ENCODE measurements at regions of chr11 and their contacts with region 1.

Region 1: DNA sequence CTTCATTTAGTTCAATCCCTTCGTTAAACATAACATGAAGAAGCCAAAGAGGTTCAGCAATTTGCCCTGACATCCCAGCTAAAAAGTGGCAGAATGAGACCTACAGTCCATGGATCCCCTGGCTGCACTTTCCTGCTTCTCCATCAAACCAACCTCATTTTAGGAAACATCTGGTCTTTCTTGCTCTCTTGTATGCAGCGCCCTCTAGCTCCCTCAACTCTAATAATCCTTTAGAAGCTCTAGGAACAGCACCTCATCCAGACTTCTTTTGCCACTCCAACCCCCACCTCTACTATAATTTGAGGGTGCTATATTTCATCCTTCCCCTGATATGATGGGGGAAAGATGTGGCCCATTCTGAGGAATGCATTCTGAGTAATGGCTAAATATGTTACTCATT is 7.4 kb downstream of the CNTF start:
- DNase-seq: peak in 3 of 9 experiments; percentile 11 to 57 (median 43)
- ATAC-seq: no peak
- H3K4me3 ChIP-seq: no peak overlapping the region
- H3K4me3 Mint-ChIP-seq: no peak overlapping the region
- H3K27ac ChIP-seq: no peak overlapping the region
- H3K27ac Mint-ChIP-seq: no peak overlapping the region
- H3K4me1 ChIP-seq: no peaks in the 10 kb centered on the region
- H3K4me1 Mint-ChIP-seq: no peaks in the 10 kb centered on the region
- H3K27me3 ChIP-seq: no peaks in the 10 kb centered on the region
- H3K27me3 Mint-ChIP-seq: no peaks in the 10 kb centered on the region
- CTCF ChIP-seq: peak; percentile 53

Region 2: GRCh38 chr11:58562375-58562800 is 67.5 kb before region 1 on chr11:
- CTCF ChIA-PET with region 1: interaction called, 35 read pairs
- POLR2A ChIA-PET with region 1: no interaction called
- intact Hi-C with region 1: no loop called
- DNase-seq: peak in 1 of 9 experiments; percentile 36
- ATAC-seq: peak; percentile 48
- H3K4me3 ChIP-seq: no peak overlapping the region
- H3K4me3 Mint-ChIP-seq: peak overlapping the region; percentile 20
- H3K27ac ChIP-seq: peak overlapping the region; percentile 7 to 37
- H3K27ac Mint-ChIP-seq: peak overlapping the region; percentile 90
- H3K4me1 ChIP-seq: peaks cover 53% of the 10 kb centered on the region
- H3K4me1 Mint-ChIP-seq: peaks cover 70% of the 10 kb centered on the region
- H3K27me3 ChIP-seq: no peaks in the 10 kb centered on the region
- H3K27me3 Mint-ChIP-seq: no peaks in the 10 kb centered on the region
- CTCF ChIP-seq: no peak

Region 3: GRCh38 chr11:58616594-58616993 is 13.3 kb before region 1 on chr11:
- CTCF ChIA-PET with region 1: interaction called, 13 read pairs
- POLR2A ChIA-PET with region 1: interaction called, 3 read pairs
- intact Hi-C with region 1: no loop called
- DNase-seq: no peak
- ATAC-seq: no peak
- H3K4me3 ChIP-seq: no peak overlapping the region
- H3K4me3 Mint-ChIP-seq: no peak overlapping the region
- H3K27ac ChIP-seq: no peak overlapping the region
- H3K27ac Mint-ChIP-seq: no peak overlapping the region
- H3K4me1 ChIP-seq: peaks cover 7% of the 10 kb centered on the region
- H3K4me1 Mint-ChIP-seq: peaks cover 6% of the 10 kb centered on the region
- H3K27me3 ChIP-seq: no peaks in the 10 kb centered on the region
- H3K27me3 Mint-ChIP-seq: no peaks in the 10 kb centered on the region
- CTCF ChIP-seq: no peak

Region 4: DNA sequence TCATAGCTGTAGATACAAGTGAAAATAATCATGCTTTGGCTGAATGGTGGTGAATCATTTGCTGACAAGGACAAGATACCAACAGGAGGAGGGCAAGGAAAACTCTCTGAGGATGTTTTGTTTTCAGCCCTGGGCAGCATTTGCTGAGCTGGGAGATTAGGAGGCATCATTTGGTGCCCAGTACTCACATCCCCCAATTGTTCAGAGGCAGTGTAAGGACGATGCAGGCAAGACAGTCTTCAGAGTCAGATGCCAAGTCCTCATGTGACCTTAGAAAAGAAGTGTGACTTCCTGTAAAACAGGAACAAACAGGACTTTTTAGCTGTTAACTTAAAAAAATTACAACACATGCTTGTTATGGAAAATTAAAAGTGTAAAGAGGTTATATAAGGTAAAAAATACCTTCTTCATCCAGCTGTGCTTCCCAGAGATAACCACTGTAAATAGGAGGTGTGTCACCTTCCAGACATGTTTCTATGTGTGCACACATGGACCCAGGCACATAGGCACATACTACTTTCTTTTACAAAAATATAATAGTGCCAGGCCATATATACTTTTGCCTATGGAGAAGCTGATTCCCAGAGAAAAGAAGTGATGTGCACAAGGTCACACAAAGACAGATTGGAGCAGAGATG is 10.6 kb after region 1 on chr11:
- CTCF ChIA-PET with region 1: interaction called, 35 read pairs
- POLR2A ChIA-PET with region 1: interaction called, 7 read pairs
- intact Hi-C with region 1: no loop called
- DNase-seq: peak in 3 of 9 experiments; percentile 32 to 63 (median 58)
- ATAC-seq: peak; percentile 70
- H3K4me3 ChIP-seq: no peak overlapping the region
- H3K4me3 Mint-ChIP-seq: no peak overlapping the region
- H3K27ac ChIP-seq: peak overlapping the region in 1 of 2 experiments; percentile 34
- H3K27ac Mint-ChIP-seq: peak overlapping the region; percentile 84
- H3K4me1 ChIP-seq: peaks cover 19% of the 10 kb centered on the region
- H3K4me1 Mint-ChIP-seq: peaks cover 27% of the 10 kb centered on the region
- H3K27me3 ChIP-seq: no peaks in the 10 kb centered on the region
- H3K27me3 Mint-ChIP-seq: no peaks in the 10 kb centered on the region
- CTCF ChIP-seq: no peak

Measured in CD8-positive, alpha-beta T cell (primary cell).